ENCODE measurements at regions of chr7 and their contacts with region 1.

Region 1: GRCh38 chr7:625376-625971 is 101.0 kb upstream of the DNAAF5 start:
- DNase-seq: no peak
- ATAC-seq: no peak
- H3K4me3 Mint-ChIP-seq: no peak overlapping the region
- H3K27ac Mint-ChIP-seq: no peak overlapping the region
- H3K4me1 Mint-ChIP-seq: peaks cover 2% of the 10 kb centered on the region
- H3K27me3 Mint-ChIP-seq: no peaks in the 10 kb centered on the region

Region 2: DNA sequence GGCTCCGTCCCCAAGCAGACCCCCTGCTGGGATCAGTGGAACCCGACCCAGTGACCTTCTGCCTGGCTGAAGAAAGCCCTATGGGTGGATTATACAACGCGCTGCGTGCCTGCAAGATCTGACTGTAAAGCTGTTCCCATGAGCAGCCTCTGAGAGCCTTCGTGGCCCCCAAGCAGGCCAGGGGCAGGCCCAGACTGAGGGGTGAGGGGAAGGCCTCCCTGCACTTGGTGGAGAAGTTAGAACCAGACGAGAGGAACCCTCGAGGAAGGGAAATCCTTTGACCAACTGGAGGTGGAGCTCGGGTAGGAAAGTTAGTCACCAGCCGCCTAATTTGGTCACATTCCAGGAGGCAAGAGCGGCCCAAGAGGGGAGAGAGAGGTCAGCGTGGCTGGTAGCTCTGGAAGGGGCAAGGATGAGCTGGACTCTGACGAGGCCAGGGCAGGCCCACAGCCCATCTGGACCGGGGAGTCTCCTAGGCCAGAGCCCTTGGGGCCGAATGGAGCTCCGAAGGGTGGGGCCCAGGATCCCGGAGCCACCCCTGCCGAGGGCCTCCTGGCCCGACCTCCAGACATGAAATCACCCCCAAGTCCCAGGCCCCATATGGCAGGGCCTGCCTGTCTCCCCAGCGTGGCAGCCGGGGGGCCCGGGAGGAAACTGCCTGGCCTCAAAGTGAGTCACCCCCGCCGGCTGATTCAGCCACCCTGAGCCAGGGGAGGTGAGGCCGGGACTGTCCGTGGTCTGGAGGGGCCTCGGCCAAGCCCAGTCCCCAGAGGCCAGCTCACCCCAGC is 82.6 kb before region 1 on chr7:
- CTCF ChIA-PET with region 1: no interaction called
- POLR2A ChIA-PET with region 1: no interaction called
- DNase-seq: no peak
- ATAC-seq: no peak
- H3K4me3 Mint-ChIP-seq: no peak overlapping the region
- H3K27ac Mint-ChIP-seq: no peak overlapping the region
- H3K4me1 Mint-ChIP-seq: peaks cover 6% of the 10 kb centered on the region
- H3K27me3 Mint-ChIP-seq: no peaks in the 10 kb centered on the region

Region 3: GRCh38 chr7:604001-604883 is 21.2 kb before region 1 on chr7:
- CTCF ChIA-PET with region 1: interaction called, 3 read pairs
- POLR2A ChIA-PET with region 1: interaction called, 128 read pairs
- DNase-seq: peak; percentile 97
- ATAC-seq: peak; percentile 83
- H3K4me3 Mint-ChIP-seq: peak overlapping the region; percentile 92
- H3K27ac Mint-ChIP-seq: peak overlapping the region; percentile 100
- H3K4me1 Mint-ChIP-seq: peaks cover 75% of the 10 kb centered on the region
- H3K27me3 Mint-ChIP-seq: no peaks in the 10 kb centered on the region

Region 4: DNA sequence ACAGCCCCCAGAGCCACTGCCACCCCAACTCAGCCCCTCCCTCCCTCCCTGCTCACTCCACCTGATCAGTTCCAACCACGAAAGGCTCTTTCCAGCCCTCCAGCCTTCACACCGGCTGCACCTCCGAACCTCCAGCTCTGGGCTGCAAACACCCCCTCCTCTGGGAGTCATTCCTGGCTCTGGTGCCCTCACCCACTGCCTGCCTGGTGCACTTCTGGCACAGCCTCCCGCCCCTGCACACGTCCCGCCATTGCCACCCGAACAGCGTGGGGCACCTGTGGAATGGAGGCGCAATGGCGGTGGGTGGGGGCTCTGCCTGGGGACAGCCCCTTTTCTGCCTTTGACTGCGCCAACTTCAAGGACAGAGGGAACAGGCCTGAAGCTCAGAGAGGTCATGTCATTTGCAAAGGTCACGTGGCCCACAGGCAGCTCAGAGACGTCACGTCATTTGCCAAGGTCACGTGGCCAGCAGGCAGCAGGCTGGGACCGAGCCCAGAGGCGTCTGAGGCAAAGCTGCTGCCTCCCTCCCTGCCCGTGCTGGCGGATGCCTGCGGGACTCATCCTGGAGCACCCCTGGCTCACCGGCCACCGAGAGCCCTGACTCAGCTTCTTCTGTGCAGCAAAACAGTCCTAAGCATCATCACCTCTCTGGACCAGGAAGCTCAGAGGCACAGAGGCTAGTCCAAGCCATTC is 25.0 kb after region 1 on chr7:
- CTCF ChIA-PET with region 1: no interaction called
- POLR2A ChIA-PET with region 1: no interaction called
- DNase-seq: no peak
- ATAC-seq: no peak
- H3K4me3 Mint-ChIP-seq: no peak overlapping the region
- H3K27ac Mint-ChIP-seq: no peak overlapping the region
- H3K4me1 Mint-ChIP-seq: no peaks in the 10 kb centered on the region
- H3K27me3 Mint-ChIP-seq: no peaks in the 10 kb centered on the region

Measured in activated CD8-positive, alpha-beta T cell treated with anti-CD3 and anti-CD28 coated beads, Interleukin-2, amount 10 ng/mL, durations not matched to agents 7 days and 5 days (primary cell).